Activated CD4-positive, alpha-beta T cell treated with anti-CD3 and anti-CD28 coated beads for 36 hours (primary cell): ENCODE measurements at regions of chr2 and their contacts with region 1.

Region 1: DNA sequence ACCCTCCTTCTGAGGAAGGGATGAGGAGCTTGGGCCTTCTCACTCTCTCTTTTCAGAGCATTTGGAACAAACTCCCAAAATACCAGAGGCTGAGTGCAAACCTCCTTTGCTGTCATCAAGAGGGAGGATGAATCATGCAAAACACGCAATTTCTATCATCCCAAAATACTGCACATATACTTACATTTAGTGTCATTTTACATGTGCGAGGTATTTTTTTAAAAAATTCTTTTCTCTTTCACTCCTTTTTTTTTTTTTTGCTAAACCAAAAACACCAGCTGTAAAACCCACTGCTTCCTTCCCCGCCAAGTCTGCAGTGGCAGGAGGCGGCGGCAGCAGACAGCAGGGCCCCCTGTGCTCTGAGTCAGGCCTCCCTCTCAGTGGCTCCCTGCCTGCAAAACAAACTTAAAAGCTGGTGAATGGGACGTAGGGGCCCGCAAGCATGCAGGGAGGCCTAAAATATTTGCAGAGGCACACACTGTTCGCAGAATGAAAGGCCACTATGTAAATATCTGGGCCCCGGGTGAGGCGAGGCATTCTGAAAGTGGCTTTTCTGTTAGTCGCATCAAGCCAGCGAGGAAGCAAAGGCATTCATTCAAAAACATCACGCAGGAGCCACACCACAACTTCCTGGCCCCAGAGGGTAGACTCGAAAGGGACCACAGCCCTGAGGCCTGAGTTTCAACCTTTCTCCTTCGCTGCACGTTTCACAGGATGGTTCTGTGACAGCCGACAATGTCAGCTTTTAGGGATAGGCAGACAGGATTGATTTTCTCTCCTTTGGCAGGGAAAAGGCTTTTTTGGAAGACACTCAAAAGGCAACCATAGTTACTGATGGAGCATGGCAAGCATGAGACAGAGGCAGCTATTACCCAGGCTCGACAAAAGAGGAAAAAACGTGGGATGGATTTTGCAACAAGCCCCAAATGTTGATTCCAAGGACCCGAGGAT is 73.4 kb downstream of the ACTR2 start:
- DNase-seq: peak; percentile 90
- ATAC-seq: peak; percentile 92
- H3K4me3 Mint-ChIP-seq: peak overlapping the region; percentile 52
- H3K27ac Mint-ChIP-seq: peak overlapping the region; percentile 79
- H3K4me1 Mint-ChIP-seq: peaks cover 48% of the 10 kb centered on the region
- H3K27me3 Mint-ChIP-seq: peaks cover 13% of the 10 kb centered on the region

Region 2: GRCh38 chr2:65024149-65024829 is 276.7 kb before region 1 on chr2:
- CTCF ChIA-PET with region 1: no interaction called
- POLR2A ChIA-PET with region 1: no interaction called
- intact Hi-C with region 1: no loop called
- DNase-seq: no peak
- ATAC-seq: no peak
- H3K4me3 Mint-ChIP-seq: no peak overlapping the region
- H3K27ac Mint-ChIP-seq: no peak overlapping the region
- H3K4me1 Mint-ChIP-seq: peaks cover 4% of the 10 kb centered on the region
- H3K27me3 Mint-ChIP-seq: no peaks in the 10 kb centered on the region

Region 3: GRCh38 chr2:65056215-65057053 is 244.6 kb before region 1 on chr2 and contains the start of gene CEP68:
- CTCF ChIA-PET with region 1: no interaction called
- POLR2A ChIA-PET with region 1: no interaction called
- intact Hi-C with region 1: loop called (anchors 2 kb)
- DNase-seq: peak; percentile 98
- ATAC-seq: peak; percentile 94
- H3K4me3 Mint-ChIP-seq: peak within 1 kb of the TSS; percentile 93
- H3K27ac Mint-ChIP-seq: peak within 1 kb of the TSS; percentile 84
- H3K4me1 Mint-ChIP-seq: peaks cover 55% of the 10 kb centered on the region
- H3K27me3 Mint-ChIP-seq: no peaks in the 10 kb centered on the region
- total RNA-seq, gene CEP68: 4.9 to 6.0 TPM

Region 4: GRCh38 chr2:65227425-65228262 is 73.4 kb before region 1 on chr2 and contains the start of gene ACTR2:
- CTCF ChIA-PET with region 1: no interaction called
- POLR2A ChIA-PET with region 1: no interaction called
- intact Hi-C with region 1: loop called (anchors 1 kb)
- DNase-seq: peak; percentile 97
- ATAC-seq: peak; percentile 96
- H3K4me3 Mint-ChIP-seq: peak within 1 kb of the TSS; percentile 95
- H3K27ac Mint-ChIP-seq: peak within 1 kb of the TSS; percentile 98
- H3K4me1 Mint-ChIP-seq: peaks cover 30% of the 10 kb centered on the region
- H3K27me3 Mint-ChIP-seq: no peaks in the 10 kb centered on the region
- total RNA-seq, gene ACTR2: 326 to 388 TPM

Region 5: GRCh38 chr2:65320042-65320725 is 19.1 kb after region 1 on chr2:
- CTCF ChIA-PET with region 1: interaction called, 6 read pairs
- POLR2A ChIA-PET with region 1: interaction called, 5 read pairs
- intact Hi-C with region 1: loop called (anchors 1 kb)
- DNase-seq: peak; percentile 45
- ATAC-seq: peak; percentile 94
- H3K4me3 Mint-ChIP-seq: peak overlapping the region; percentile 21
- H3K27ac Mint-ChIP-seq: peak overlapping the region; percentile 74
- H3K4me1 Mint-ChIP-seq: peaks cover 21% of the 10 kb centered on the region
- H3K27me3 Mint-ChIP-seq: no peaks in the 10 kb centered on the region

Region 6: GRCh38 chr2:65357095-65357958 is 56.3 kb after region 1 on chr2:
- CTCF ChIA-PET with region 1: interaction called, 5 read pairs
- POLR2A ChIA-PET with region 1: interaction called, 3 read pairs
- intact Hi-C with region 1: loop called (anchors 2 to 5 kb)
- DNase-seq: peak; percentile 38
- ATAC-seq: peak; percentile 77
- H3K4me3 Mint-ChIP-seq: no peak overlapping the region
- H3K27ac Mint-ChIP-seq: no peak overlapping the region
- H3K4me1 Mint-ChIP-seq: peaks cover 26% of the 10 kb centered on the region
- H3K27me3 Mint-ChIP-seq: peaks cover 5% of the 10 kb centered on the region

Region 7: GRCh38 chr2:65382776-65383357 is 81.8 kb after region 1 on chr2:
- CTCF ChIA-PET with region 1: interaction called, 3 read pairs
- POLR2A ChIA-PET with region 1: no interaction called
- intact Hi-C with region 1: loop called (anchors 1 kb)
- DNase-seq: peak; percentile 95
- ATAC-seq: peak; percentile 90
- H3K4me3 Mint-ChIP-seq: peak overlapping the region; percentile 26
- H3K27ac Mint-ChIP-seq: peak overlapping the region; percentile 33
- H3K4me1 Mint-ChIP-seq: peaks cover 32% of the 10 kb centered on the region
- H3K27me3 Mint-ChIP-seq: peaks cover 13% of the 10 kb centered on the region

Region 8: DNA sequence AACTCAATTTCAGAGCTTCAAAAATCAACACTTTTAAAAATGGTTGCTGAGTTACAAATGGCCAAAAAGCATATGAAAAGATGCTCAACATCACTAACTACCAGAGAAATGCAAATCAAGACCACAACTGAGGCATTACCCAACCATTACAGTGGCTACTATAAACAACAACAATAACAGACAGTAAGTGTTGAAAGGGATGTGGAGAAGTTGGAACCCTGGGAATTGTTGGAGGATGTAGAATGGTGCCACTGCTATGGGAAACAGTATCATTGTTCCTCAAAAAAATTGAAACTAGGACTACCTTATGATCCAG is 304.7 kb after region 1 on chr2:
- CTCF ChIA-PET with region 1: no interaction called
- POLR2A ChIA-PET with region 1: no interaction called
- intact Hi-C with region 1: loop called in 1 of 2 experiments (anchors 1 kb)
- DNase-seq: no peak
- ATAC-seq: no peak
- H3K4me3 Mint-ChIP-seq: no peak overlapping the region
- H3K27ac Mint-ChIP-seq: peak overlapping the region; percentile 34
- H3K4me1 Mint-ChIP-seq: peaks cover 19% of the 10 kb centered on the region
- H3K27me3 Mint-ChIP-seq: no peaks in the 10 kb centered on the region